SK-N-SH (cell line): ENCODE measurements at regions of chr4 and their contacts with region 1.

Region 1: GRCh38 chr4:179307297-179308136 is 1865.3 kb upstream of the AGA start:
- DNase-seq: peak; percentile 34
- H3K4me3 ChIP-seq: no peak overlapping the region
- H3K27ac ChIP-seq: no peak overlapping the region
- H3K4me1 ChIP-seq: no peaks in the 10 kb centered on the region
- H3K27me3 ChIP-seq: no peaks in the 10 kb centered on the region
- CTCF ChIP-seq: peak; percentile 78
- EP300 ChIP-seq: no peak
- RAD21 ChIP-seq: peak; percentile 71

Region 2: DNA sequence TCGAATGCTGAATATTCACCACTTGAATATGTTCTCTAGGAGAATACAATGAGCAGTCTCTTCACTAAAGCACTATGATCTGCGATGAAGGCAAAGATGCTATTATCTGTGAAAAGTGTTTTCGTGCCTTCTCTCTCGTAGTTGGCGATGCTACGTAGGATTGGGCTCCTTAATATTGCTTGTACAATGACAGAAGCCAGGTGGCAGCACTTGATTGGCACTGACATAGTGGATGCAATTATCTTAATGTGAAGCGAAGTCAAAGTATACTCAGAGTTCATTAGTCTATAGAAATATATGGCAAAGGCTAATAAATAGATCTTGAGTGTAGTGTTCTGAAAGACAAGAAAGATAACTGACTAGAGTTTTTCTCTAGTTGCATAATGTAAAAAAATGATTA is 729.6 kb before region 1 on chr4:
- CTCF ChIA-PET with region 1: interaction called, 10 read pairs
- POLR2A ChIA-PET with region 1: no interaction called
- DNase-seq: peak; percentile 12
- H3K4me3 ChIP-seq: peak overlapping the region in 1 of 2 experiments; percentile 44; a peak in 1 of 4 replicates
- H3K27ac ChIP-seq: no peak overlapping the region
- H3K4me1 ChIP-seq: no peaks in the 10 kb centered on the region
- H3K27me3 ChIP-seq: no peaks in the 10 kb centered on the region; the same call in 1 of the 2 replicates
- CTCF ChIP-seq: peak; percentile 43
- EP300 ChIP-seq: no peak
- RAD21 ChIP-seq: peak; percentile 60

Region 3: GRCh38 chr4:179163147-179163546 is 144.4 kb before region 1 on chr4:
- CTCF ChIA-PET with region 1: no interaction called
- POLR2A ChIA-PET with region 1: no interaction called
- DNase-seq: no peak
- H3K4me3 ChIP-seq: no peak overlapping the region
- H3K27ac ChIP-seq: no peak overlapping the region
- H3K4me1 ChIP-seq: no peaks in the 10 kb centered on the region
- H3K27me3 ChIP-seq: no peaks in the 10 kb centered on the region
- CTCF ChIP-seq: no peak
- EP300 ChIP-seq: no peak
- RAD21 ChIP-seq: no peak

Region 4: DNA sequence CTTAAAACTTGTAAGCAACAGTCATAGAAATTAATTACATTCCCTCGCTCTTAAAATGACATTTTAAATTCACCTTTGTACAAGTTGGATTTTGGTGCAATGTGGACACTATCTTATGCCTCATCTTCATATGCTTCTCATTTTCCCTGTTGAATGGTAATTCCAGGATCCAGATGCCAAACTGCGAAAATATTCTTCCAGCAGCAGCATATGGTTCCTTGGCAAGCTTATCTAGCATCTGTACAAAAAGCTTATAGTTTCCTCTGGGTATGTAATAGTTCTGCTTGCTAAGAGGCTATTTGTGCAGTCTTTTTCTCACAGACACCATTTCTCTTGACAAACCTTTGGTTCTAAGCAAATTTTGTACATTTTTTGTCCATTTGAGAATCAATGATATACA is 214.4 kb after region 1 on chr4:
- CTCF ChIA-PET with region 1: no interaction called
- POLR2A ChIA-PET with region 1: no interaction called
- DNase-seq: peak; percentile 8
- H3K4me3 ChIP-seq: no peak overlapping the region
- H3K27ac ChIP-seq: no peak overlapping the region
- H3K4me1 ChIP-seq: no peaks in the 10 kb centered on the region; a peak in 1 of 4 replicates
- H3K27me3 ChIP-seq: no peaks in the 10 kb centered on the region
- CTCF ChIP-seq: no peak
- EP300 ChIP-seq: no peak
- RAD21 ChIP-seq: no peak